Posterior vena cava (tissue), 2 donors: ENCODE measurements at regions of chr22 and their contacts with region 1.

Region 1: DNA sequence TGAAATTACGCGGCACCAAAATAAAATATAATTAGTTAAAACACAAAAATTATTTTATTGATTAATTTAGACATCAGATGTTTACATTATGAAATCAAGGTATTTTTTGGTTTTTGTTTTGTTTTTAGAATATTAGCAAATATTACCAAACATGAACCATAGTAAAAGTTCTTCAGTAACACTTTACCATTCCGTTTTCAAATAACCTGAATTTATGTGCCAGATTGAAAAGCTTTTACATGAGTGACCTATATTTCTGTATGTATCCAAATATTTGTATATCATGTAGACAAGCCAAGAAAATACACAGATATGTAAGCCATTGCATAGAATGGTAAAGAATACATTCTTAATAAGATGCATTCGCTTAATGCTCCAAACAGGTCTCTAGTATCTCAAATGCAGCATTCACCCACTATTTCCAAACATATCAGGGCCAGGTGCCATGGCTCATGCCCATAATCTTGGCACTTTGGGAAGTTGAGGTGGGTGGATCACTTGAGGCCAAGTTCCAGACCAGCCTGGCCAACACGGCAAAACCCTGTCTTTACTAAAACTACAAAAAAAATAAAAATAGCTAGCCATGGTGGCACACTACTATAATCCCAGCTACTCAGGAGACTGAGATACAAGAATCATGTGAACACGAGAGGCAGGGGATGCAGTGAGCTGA is 102.4 kb upstream of the SERPIND1 start:
- DNase-seq: no peak

Region 2: GRCh38 chr22:20456064-20456721 is 215.4 kb before region 1 on chr22:
- intact Hi-C with region 1: no loop called
- DNase-seq: peak; percentile 92

Region 3: GRCh38 chr22:20606041-20606783 is 65.3 kb before region 1 on chr22:
- intact Hi-C with region 1: loop called in 1 of 2 experiments (anchors 10 kb)
- DNase-seq: no peak